ENCODE measurements at regions of chr3 and their contacts with region 1.

Region 1: GRCh38 chr3:12349895-12350813 is 61.3 kb downstream of the PPARG start:
- DNase-seq: peak in 1 of 5 donors; percentile 36
- ATAC-seq: peak; percentile 8 to 67 (median 63)
- H3K4me3 ChIP-seq: peak overlapping the region in 2 of 12 donors; percentile 2 to 13
- H3K27ac ChIP-seq: peak overlapping the region in 8 of 12 donors; percentile 2 to 41 (median 13)
- H3K4me1 ChIP-seq: peaks cover 6 to 47% (median 36%) of the 10 kb centered on the region in 12 donors
- H3K27me3 ChIP-seq: no peaks in the 10 kb centered on the region
- CTCF ChIP-seq: no peak
- POLR2A ChIP-seq: no peak

Region 2: GRCh38 chr3:12294885-12295580 is 55.1 kb before region 1 on chr3:
- intact Hi-C with region 1: loop called in 1 of 10 experiments (anchors 5 kb)
- DNase-seq: no peak
- ATAC-seq: no peak
- H3K4me3 ChIP-seq: no peak overlapping the region
- H3K27ac ChIP-seq: no peak overlapping the region
- H3K4me1 ChIP-seq: peaks cover 0 to 9% (median 0%) of the 10 kb centered on the region in 12 donors
- H3K27me3 ChIP-seq: no peaks in the 10 kb centered on the region
- CTCF ChIP-seq: no peak
- POLR2A ChIP-seq: no peak

Region 3: DNA sequence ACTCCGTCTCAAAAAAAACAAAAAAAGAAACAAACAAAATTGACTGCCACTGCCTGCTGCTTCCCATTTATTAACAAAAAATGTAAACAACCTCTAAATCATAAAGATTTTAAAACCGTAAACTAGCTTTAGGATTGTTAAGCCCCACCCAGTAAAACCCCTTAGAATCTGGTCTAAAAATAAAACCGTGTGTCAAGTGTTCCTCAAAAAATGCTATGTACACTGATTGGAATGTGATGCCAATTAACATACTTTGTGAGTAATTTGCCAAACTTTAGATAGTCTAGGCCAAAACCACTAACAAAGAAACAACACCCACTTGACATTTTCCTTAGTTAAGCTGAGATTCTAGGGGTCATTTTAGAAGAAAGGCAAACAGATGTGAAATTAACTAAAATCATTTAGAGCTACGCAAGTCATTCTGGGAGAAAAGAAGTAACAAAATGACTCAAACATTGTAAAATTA is 308.5 kb after region 1 on chr3:
- intact Hi-C with region 1: loop called in 1 of 10 experiments (anchors 10 kb)
- DNase-seq: no peak
- ATAC-seq: no peak
- H3K4me3 ChIP-seq: no peak overlapping the region
- H3K27ac ChIP-seq: peak overlapping the region; percentile 33 to 100 (median 66)
- H3K4me1 ChIP-seq: peaks cover 0 to 89% (median 68%) of the 10 kb centered on the region in 12 donors
- H3K27me3 ChIP-seq: no peaks in the 10 kb centered on the region
- CTCF ChIP-seq: no peak
- POLR2A ChIP-seq: no peak

Region 4: GRCh38 chr3:13324835-13325501 is 974.8 kb after region 1 on chr3:
- intact Hi-C with region 1: no loop called
- DNase-seq: no peak
- ATAC-seq: no peak
- H3K4me3 ChIP-seq: no peak overlapping the region
- H3K27ac ChIP-seq: no peak overlapping the region
- H3K4me1 ChIP-seq: no peaks in the 10 kb centered on the region
- H3K27me3 ChIP-seq: no peaks in the 10 kb centered on the region
- CTCF ChIP-seq: no peak
- POLR2A ChIP-seq: no peak

Measured in heart left ventricle (tissue), 16 donors.